H1 (cell line): ENCODE measurements at regions of chr7 and their contacts with region 1.

Region 1: GRCh38 chr7:130896898-130897514 is 163.0 kb upstream of the KLF14 start:
- DNase-seq: peak in 1 of 2 experiments; percentile 80
- H3K4me3 ChIP-seq: no peak overlapping the region
- H3K27ac ChIP-seq: no peak overlapping the region
- H3K4me1 ChIP-seq: peaks cover 6 to 14% (median 8%) of the 10 kb centered on the region in 4 experiments; a peak in 6 of 7 replicates
- H3K27me3 ChIP-seq: no peaks in the 10 kb centered on the region
- CTCF ChIP-seq: peak; percentile 85 to 89 (median 86)
- EP300 ChIP-seq: no peak
- POLR2A ChIP-seq: no peak
- RAD21 ChIP-seq: peak; percentile 93 to 95

Region 2: DNA sequence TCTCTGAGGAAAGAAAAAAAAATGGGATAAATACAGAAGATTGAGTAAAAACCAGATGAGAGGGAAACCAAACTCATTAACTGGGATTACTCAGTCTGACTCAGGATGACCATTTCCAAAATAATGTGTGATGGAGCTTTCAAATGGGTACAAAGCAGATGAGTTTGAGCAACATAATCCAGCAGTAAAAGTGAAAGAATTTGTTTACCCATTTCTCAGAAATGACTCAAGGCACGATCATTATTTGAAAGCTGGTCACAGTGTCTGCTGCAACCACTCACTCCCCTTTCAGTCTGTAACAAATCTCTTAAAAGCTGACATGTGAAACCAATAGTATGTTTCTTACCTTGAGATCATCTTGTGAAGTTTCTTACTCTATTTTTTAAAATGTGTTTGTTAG is 58.3 kb before region 1 on chr7:
- CTCF ChIA-PET with region 1: no interaction called
- POLR2A ChIA-PET with region 1: no interaction called
- DNase-seq: no peak
- H3K4me3 ChIP-seq: no peak overlapping the region
- H3K27ac ChIP-seq: no peak overlapping the region
- H3K4me1 ChIP-seq: no peaks in the 10 kb centered on the region; a peak in 1 of 7 replicates
- H3K27me3 ChIP-seq: no peaks in the 10 kb centered on the region
- CTCF ChIP-seq: no peak
- EP300 ChIP-seq: no peak
- POLR2A ChIP-seq: no peak
- RAD21 ChIP-seq: no peak

Region 3: GRCh38 chr7:130875265-130875741 is 21.7 kb before region 1 on chr7:
- CTCF ChIA-PET with region 1: interaction called, 120 read pairs
- POLR2A ChIA-PET with region 1: interaction called, 4 read pairs
- DNase-seq: peak; percentile 54 to 86
- H3K4me3 ChIP-seq: no peak overlapping the region
- H3K27ac ChIP-seq: no peak overlapping the region
- H3K4me1 ChIP-seq: peaks cover 0 to 10% (median 2%) of the 10 kb centered on the region in 4 experiments; a peak in 2 of 7 replicates
- H3K27me3 ChIP-seq: no peaks in the 10 kb centered on the region
- CTCF ChIP-seq: peak; percentile 88 to 97 (median 96)
- EP300 ChIP-seq: no peak
- POLR2A ChIP-seq: no peak
- RAD21 ChIP-seq: peak; percentile 91 to 95

Region 4: GRCh38 chr7:130943336-130943901 is 46.4 kb after region 1 on chr7:
- CTCF ChIA-PET with region 1: interaction called, 20 read pairs
- POLR2A ChIA-PET with region 1: no interaction called
- DNase-seq: no peak
- H3K4me3 ChIP-seq: no peak overlapping the region
- H3K27ac ChIP-seq: no peak overlapping the region
- H3K4me1 ChIP-seq: peaks cover 4 to 10% (median 6%) of the 10 kb centered on the region in 4 experiments
- H3K27me3 ChIP-seq: no peaks in the 10 kb centered on the region
- CTCF ChIP-seq: no peak
- EP300 ChIP-seq: no peak
- POLR2A ChIP-seq: no peak
- RAD21 ChIP-seq: no peak

Region 5: GRCh38 chr7:130988443-130988842 is 91.4 kb after region 1 on chr7:
- CTCF ChIA-PET with region 1: interaction called, 35 read pairs
- POLR2A ChIA-PET with region 1: no interaction called
- DNase-seq: no peak
- H3K4me3 ChIP-seq: no peak overlapping the region
- H3K27ac ChIP-seq: no peak overlapping the region
- H3K4me1 ChIP-seq: no peaks in the 10 kb centered on the region
- H3K27me3 ChIP-seq: no peaks in the 10 kb centered on the region
- CTCF ChIP-seq: no peak
- EP300 ChIP-seq: no peak
- POLR2A ChIP-seq: no peak
- RAD21 ChIP-seq: no peak

Region 6: DNA sequence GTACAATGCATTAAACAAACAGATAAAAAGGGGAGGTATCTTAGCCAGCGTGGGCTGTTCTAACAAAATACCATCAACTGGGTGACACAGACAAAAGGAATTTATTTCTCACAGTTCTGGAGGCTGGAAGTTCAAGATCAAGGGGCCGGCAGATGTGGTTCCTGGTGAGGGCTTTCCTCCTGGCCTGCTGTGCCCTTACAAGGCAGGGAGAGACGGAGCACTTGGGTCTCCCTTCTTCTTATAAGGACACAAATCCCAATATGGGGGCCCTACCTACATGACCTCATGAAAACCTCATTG is 118.6 kb after region 1 on chr7:
- CTCF ChIA-PET with region 1: interaction called, 20 read pairs
- POLR2A ChIA-PET with region 1: no interaction called
- DNase-seq: no peak
- H3K4me3 ChIP-seq: no peak overlapping the region
- H3K27ac ChIP-seq: no peak overlapping the region
- H3K4me1 ChIP-seq: peaks cover 0 to 3% (median 2%) of the 10 kb centered on the region in 4 experiments; a peak in 5 of 7 replicates
- H3K27me3 ChIP-seq: no peaks in the 10 kb centered on the region
- CTCF ChIP-seq: no peak
- EP300 ChIP-seq: no peak
- POLR2A ChIP-seq: no peak
- RAD21 ChIP-seq: no peak